ENCODE measurements at regions of chr2 and their contacts with region 1.

Region 1: GRCh38 chr2:241315093-241315878 is at the start of gene HDLBP:
- DNase-seq: peak; percentile 99
- H3K4me3 ChIP-seq: peak within 1 kb of the TSS; percentile 96
- H3K27ac ChIP-seq: peak within 1 kb of the TSS; percentile 98
- H3K27me3 ChIP-seq: no peaks in the 10 kb centered on the region
- CTCF ChIP-seq: no peak
- polyA plus RNA-seq, gene HDLBP: 707 and 731 TPM in 2 replicates

Region 2: GRCh38 chr2:241228081-241228859 is 87.0 kb before region 1 on chr2:
- CTCF ChIA-PET with region 1: no interaction called
- POLR2A ChIA-PET with region 1: no interaction called
- DNase-seq: no peak
- H3K4me3 ChIP-seq: no peak overlapping the region
- H3K27ac ChIP-seq: peak overlapping the region; percentile 31
- H3K27me3 ChIP-seq: no peaks in the 10 kb centered on the region
- CTCF ChIP-seq: no peak

Region 3: GRCh38 chr2:241271641-241272297 is 43.5 kb before region 1 on chr2:
- CTCF ChIA-PET with region 1: interaction called, 3 read pairs
- POLR2A ChIA-PET with region 1: interaction called, 15 read pairs
- DNase-seq: peak; percentile 33
- H3K4me3 ChIP-seq: peak overlapping the region; percentile 84
- H3K27ac ChIP-seq: peak overlapping the region; percentile 52
- H3K27me3 ChIP-seq: no peaks in the 10 kb centered on the region
- CTCF ChIP-seq: no peak

Region 4: GRCh38 chr2:241282555-241282954 is 32.7 kb before region 1 on chr2:
- CTCF ChIA-PET with region 1: interaction called, 4 read pairs
- POLR2A ChIA-PET with region 1: interaction called, 10 read pairs
- DNase-seq: no peak
- H3K4me3 ChIP-seq: no peak overlapping the region
- H3K27ac ChIP-seq: no peak overlapping the region
- H3K27me3 ChIP-seq: no peaks in the 10 kb centered on the region
- CTCF ChIP-seq: no peak

Region 5: GRCh38 chr2:241302759-241303651 is 12.3 kb before region 1 on chr2:
- CTCF ChIA-PET with region 1: interaction called, 3 read pairs
- POLR2A ChIA-PET with region 1: interaction called, 20 read pairs
- DNase-seq: no peak
- H3K4me3 ChIP-seq: no peak overlapping the region
- H3K27ac ChIP-seq: no peak overlapping the region
- H3K27me3 ChIP-seq: no peaks in the 10 kb centered on the region
- CTCF ChIP-seq: no peak